Activated CD4-positive, alpha-beta T cell treated with anti-CD3 and anti-CD28 coated beads, Interleukin-2, amount 10 ng/mL, durations not matched to agents 24 days and 14 days (primary cell): ENCODE measurements at regions of chr15 and their contacts with region 1.

Region 1: GRCh38 chr15:57751177-57751800 is 44.8 kb downstream of the POLR2M start:
- DNase-seq: no peak
- H3K4me3 Mint-ChIP-seq: no peak overlapping the region
- H3K27ac Mint-ChIP-seq: no peak overlapping the region
- H3K4me1 Mint-ChIP-seq: peaks cover 3% of the 10 kb centered on the region
- H3K27me3 Mint-ChIP-seq: peaks cover 8% of the 10 kb centered on the region

Region 2: DNA sequence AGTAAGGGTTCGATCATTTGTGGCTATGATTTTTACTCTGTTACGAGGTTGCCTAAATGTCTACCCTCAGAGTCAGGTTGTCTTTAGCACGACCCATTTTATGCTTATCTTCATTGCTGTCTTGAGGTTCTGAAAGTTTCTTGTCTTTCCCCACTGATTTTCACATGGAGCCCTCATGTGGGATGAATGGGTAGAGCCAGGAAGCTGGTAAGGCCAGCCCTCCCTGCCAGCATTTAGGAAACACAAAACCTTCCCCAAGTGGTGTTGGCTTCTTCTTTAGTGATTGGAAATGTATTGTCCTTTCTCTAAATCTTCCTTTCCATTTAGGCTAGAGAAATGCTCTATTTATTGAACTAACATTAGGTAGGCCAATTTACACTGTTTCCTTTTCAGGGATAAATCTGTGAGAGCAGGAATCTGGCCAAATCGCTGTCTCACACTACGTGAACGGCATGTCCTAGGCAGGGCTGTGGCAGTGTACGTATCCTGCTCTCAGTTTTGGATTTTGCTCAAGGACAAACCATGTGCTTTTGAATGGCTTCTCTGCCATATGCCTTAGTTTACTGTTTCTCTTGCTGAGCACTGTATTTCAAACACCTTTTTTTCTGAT is 115.9 kb before region 1 on chr15:
- intact Hi-C with region 1: no loop called
- DNase-seq: no peak
- H3K4me3 Mint-ChIP-seq: no peak overlapping the region
- H3K27ac Mint-ChIP-seq: no peak overlapping the region
- H3K4me1 Mint-ChIP-seq: no peaks in the 10 kb centered on the region
- H3K27me3 Mint-ChIP-seq: no peaks in the 10 kb centered on the region

Region 3: GRCh38 chr15:57819646-57820045 is 68.4 kb after region 1 on chr15:
- intact Hi-C with region 1: loop called (anchors 10 kb)
- DNase-seq: no peak
- H3K4me3 Mint-ChIP-seq: no peak overlapping the region
- H3K27ac Mint-ChIP-seq: no peak overlapping the region
- H3K4me1 Mint-ChIP-seq: no peaks in the 10 kb centered on the region
- H3K27me3 Mint-ChIP-seq: peaks cover 27% of the 10 kb centered on the region

Region 4: DNA sequence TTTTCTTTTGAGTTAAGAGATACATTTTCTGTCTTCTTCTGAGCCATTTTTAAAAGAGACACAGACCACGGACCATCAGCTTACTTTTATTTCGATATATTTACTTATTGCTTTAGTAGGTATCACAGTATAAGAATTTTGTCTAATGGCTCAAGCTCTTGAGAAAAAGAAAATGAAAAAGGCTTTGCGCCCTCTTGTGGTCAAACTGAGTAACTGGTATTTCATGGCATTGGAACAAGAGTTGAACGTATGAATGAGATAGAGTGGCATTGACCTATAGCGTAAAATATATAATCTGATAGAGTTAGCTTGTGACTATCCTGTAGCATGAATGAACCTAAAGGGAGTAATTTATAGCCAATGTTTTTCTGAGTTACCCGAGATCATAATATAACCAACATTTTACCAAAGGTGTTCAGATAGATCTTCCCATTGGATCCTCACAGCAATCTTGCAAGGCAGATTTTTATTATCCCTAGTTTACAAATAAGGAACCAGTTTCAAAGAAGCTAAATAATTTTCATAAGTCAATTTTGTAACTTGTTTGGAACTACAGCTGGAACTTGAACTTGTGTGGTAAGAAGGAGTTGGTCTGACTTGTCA is 109.8 kb after region 1 on chr15:
- intact Hi-C with region 1: loop called (anchors 1 kb)
- DNase-seq: peak; percentile 82
- H3K4me3 Mint-ChIP-seq: no peak overlapping the region
- H3K27ac Mint-ChIP-seq: no peak overlapping the region
- H3K4me1 Mint-ChIP-seq: peaks cover 7% of the 10 kb centered on the region
- H3K27me3 Mint-ChIP-seq: peaks cover 31% of the 10 kb centered on the region

Region 5: DNA sequence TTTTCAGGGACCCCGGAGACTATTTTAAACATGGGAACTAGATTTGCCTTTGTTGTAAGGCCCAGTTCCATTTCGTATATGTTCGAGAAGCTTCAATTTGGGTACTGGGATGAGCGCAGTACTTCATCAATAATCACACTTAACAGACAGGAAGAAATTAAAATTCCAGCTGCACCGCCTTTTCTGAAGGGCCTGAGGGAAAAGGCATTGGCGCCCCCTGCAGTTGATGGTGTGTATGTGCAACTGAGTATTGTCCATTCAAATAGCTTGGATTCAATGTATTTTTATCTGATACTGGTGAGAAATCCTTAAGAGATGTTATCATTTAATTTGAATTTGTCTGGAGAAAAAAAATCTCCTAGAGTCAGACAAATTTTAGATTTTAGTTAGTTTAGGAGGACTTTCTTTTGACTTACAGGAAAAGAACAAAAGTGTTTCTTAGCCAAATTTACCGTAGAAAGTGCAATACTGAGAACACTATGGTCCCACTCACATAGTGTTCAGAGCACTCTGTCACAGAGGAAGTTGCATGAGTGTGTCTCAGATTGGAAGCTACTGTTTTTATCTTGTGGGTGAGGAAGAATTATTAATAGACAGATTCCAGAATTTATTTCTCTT is 319.6 kb after region 1 on chr15:
- intact Hi-C with region 1: loop called (anchors 10 kb)
- DNase-seq: peak; percentile 83
- H3K4me3 Mint-ChIP-seq: no peak overlapping the region
- H3K27ac Mint-ChIP-seq: no peak overlapping the region
- H3K4me1 Mint-ChIP-seq: peaks cover 4% of the 10 kb centered on the region
- H3K27me3 Mint-ChIP-seq: peaks cover 55% of the 10 kb centered on the region